ENCODE measurements at regions of chr17 and their contacts with region 1.

Region 1: GRCh38 chr17:45385331-45385997 is 47.2 kb downstream of the ARHGAP27 start:
- DNase-seq: peak; percentile 87
- H3K4me3 ChIP-seq: peak overlapping the region in 1 of 2 experiments; percentile 21; a peak in 1 of 4 replicates
- H3K27ac ChIP-seq: no peak overlapping the region
- H3K4me1 ChIP-seq: peaks cover 0 to 6% of the 10 kb centered on the region in 2 experiments; a peak in 1 of 4 replicates
- H3K27me3 ChIP-seq: no peaks in the 10 kb centered on the region
- CTCF ChIP-seq: peak; percentile 97
- EP300 ChIP-seq: no peak
- RAD21 ChIP-seq: peak; percentile 97

Region 2: GRCh38 chr17:45235416-45236281 is 149.8 kb before region 1 on chr17:
- CTCF ChIA-PET with region 1: interaction called, 132 read pairs
- POLR2A ChIA-PET with region 1: interaction called, 6 read pairs
- DNase-seq: peak; percentile 81
- H3K4me3 ChIP-seq: no peak overlapping the region
- H3K27ac ChIP-seq: no peak overlapping the region
- H3K4me1 ChIP-seq: peaks cover 4 to 16% of the 10 kb centered on the region in 2 experiments; a peak in 2 of 4 replicates
- H3K27me3 ChIP-seq: no peaks in the 10 kb centered on the region
- CTCF ChIP-seq: peak; percentile 83
- EP300 ChIP-seq: no peak
- RAD21 ChIP-seq: peak; percentile 65

Region 3: DNA sequence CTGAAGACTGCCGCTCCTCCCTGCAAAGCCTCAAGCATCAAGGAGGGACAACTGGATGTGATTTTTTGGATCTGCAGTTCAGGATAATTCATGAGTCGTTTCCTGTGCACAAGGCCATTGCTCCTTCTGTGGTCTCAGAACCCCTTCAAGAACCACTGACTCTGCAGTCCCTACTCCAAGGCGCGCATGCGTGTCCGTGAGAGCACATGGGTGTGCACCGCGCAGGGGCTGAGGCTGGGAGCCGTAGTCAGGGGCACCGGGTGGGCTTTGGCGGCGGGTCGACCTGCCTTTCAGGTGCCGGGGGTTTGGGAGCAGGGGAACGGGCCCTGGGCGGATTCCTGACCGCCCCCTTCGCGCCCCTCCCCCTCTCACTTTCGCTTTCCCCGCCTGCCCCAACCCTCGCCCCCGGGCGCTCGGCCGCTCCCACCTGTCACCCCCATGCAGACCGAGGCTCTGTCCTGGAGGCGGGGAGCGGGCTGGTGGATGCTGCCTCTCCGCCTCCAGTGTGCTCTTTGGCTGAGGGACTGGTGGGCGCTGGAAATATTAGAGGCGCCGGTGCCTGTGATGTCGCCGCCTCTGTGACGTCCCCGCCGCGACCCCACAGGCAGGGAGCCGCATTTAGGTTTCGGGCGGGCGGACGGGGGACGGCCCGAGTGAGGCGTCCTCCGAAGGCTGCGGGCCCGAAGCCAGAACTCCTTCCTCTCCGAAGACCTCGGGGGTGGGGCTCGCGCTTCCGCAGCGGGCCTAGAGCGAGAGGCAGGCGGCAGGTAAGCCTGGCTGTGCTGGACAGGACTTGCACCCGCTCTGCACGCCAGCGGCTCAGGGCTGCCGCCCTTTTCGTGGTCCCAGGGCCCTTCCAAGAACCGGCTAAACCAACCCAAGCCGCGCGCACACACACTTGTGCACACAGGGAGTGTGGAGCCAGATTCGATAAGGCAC is 123.6 kb before region 1 on chr17 and contains the start of gene SPATA32:
- CTCF ChIA-PET with region 1: interaction called, 13 read pairs
- POLR2A ChIA-PET with region 1: no interaction called
- DNase-seq: peak; percentile 71
- H3K4me3 ChIP-seq: peak within 1 kb of the TSS in 1 of 2 experiments; percentile 16; a peak in 1 of 4 replicates
- H3K27ac ChIP-seq: no peak within 1 kb of the TSS; a peak in 1 of 4 replicates
- H3K4me1 ChIP-seq: peaks cover 0 to 9% of the 10 kb centered on the region in 2 experiments; a peak in 3 of 4 replicates
- H3K27me3 ChIP-seq: no peaks in the 10 kb centered on the region
- CTCF ChIP-seq: no peak
- EP300 ChIP-seq: no peak
- RAD21 ChIP-seq: no peak
- polyA plus RNA-seq, gene SPATA32: 0.08 TPM in 1 of 2 replicates, not detected in the other

Region 4: DNA sequence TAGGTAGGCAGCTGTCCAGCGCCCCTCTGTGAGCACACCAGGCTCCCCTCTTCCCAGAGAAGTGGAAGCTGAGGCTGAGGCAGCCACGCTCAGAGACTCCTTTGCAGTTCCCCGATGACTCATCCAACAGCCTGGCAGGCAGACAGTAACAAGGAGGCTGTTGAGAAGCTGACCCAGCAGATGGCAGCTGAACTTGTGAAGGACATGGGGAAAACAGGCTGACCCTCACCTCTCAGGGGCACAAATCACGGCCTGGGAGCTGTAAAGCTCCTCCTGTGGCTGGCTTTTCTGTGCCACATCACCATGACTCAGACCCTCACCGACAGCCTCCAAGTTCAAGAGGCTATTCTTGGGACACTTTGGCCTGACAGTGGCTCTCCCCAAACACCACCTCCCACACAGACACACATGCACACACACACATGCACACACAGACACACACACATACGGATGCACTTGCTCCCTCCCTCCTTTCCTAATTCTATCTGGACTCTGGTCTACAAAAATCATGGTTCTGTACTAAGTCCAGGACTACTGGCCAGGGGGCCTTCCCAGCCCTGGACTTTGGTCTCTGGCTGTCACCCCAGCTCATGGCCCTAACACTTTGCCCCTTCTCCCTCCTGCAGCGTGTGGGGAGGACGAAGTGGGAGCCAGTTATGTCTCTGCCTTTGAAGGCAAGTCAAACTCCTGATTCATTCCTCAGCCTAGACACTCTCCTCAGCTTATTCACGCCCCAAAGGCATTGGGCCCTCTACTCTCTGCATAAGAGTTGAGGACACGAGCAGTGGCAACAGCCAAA is 91.9 kb before region 1 on chr17:
- CTCF ChIA-PET with region 1: interaction called, 13 read pairs
- POLR2A ChIA-PET with region 1: no interaction called
- DNase-seq: no peak
- H3K4me3 ChIP-seq: peak overlapping the region in 1 of 2 experiments; percentile 0; a peak in 1 of 4 replicates
- H3K27ac ChIP-seq: peak overlapping the region; percentile 94 to 95
- H3K4me1 ChIP-seq: peaks cover 57 to 78% of the 10 kb centered on the region in 2 experiments
- H3K27me3 ChIP-seq: no peaks in the 10 kb centered on the region
- CTCF ChIP-seq: peak; percentile 36
- EP300 ChIP-seq: peak in 1 of 2 experiments; percentile 89; a peak in 2 of 4 replicates
- RAD21 ChIP-seq: no peak

Region 5: GRCh38 chr17:45317112-45317928 is 68.1 kb before region 1 on chr17:
- CTCF ChIA-PET with region 1: interaction called, 29 read pairs
- POLR2A ChIA-PET with region 1: no interaction called
- DNase-seq: peak; percentile 99
- H3K4me3 ChIP-seq: peak overlapping the region; percentile 87 to 93
- H3K27ac ChIP-seq: peak overlapping the region; percentile 95 to 99
- H3K4me1 ChIP-seq: peaks cover 47 to 58% of the 10 kb centered on the region in 2 experiments
- H3K27me3 ChIP-seq: no peaks in the 10 kb centered on the region
- CTCF ChIP-seq: no peak
- EP300 ChIP-seq: no peak
- RAD21 ChIP-seq: 0 out of 2 replicates have a peak, but pooled peaks have one; percentile 15

Region 6: DNA sequence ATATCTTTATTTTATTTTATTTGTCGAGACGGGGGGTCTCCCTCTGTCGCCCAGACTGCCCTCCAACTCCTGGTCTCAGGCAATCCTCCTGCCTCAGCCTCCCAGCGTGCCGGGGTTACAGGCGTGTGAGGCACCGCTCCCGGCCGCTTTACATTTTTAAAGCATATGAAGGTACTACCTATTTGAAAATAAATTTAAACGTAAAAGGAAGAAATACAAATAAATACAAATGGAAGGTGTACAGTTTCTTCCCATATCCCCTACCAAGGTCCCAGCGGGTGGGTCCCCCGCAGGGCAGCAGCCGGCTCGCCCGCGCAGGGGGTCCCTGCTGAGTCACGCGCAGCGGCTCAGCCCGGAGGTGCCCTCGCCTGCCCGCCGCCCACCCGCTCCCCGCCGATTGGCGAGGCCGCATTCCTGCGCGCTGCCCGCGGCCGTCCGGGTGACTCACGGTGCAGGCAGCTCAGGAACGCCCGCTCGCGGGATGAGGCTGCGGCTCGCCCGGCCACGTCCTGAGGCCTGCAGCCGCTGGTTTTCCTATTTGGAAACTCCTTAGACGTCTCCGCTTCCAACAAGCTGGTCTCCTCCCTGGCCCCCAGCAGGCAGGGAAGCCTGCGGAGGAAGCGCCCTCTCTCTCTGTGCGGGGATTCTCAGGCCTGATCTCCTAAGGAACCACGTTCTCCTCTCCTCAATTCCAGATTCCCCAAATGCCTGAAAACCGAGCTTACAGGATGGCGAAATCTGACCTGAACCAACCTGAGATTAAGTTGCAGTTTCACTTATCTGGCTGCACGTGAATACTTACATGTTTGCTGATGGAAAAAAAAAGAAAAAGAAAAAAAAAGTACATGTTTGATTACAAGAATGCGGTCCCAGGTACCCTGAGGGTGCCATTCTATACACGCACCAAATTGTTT is 13.8 kb before region 1 on chr17:
- CTCF ChIA-PET with region 1: interaction called, 24 read pairs
- POLR2A ChIA-PET with region 1: no interaction called
- DNase-seq: peak; percentile 78
- H3K4me3 ChIP-seq: peak overlapping the region; percentile 1 to 43; a peak in 1 of 4 replicates
- H3K27ac ChIP-seq: peak overlapping the region; percentile 78 to 96
- H3K4me1 ChIP-seq: peaks cover 2 to 31% of the 10 kb centered on the region in 2 experiments; a peak in 3 of 4 replicates
- H3K27me3 ChIP-seq: no peaks in the 10 kb centered on the region
- CTCF ChIP-seq: no peak; the same call in none of the 2 replicates
- EP300 ChIP-seq: peak in 1 of 2 experiments; percentile 94; a peak in 3 of 4 replicates
- RAD21 ChIP-seq: no peak

Region 7: GRCh38 chr17:45440155-45440778 is 54.8 kb after region 1 on chr17:
- CTCF ChIA-PET with region 1: no interaction called
- POLR2A ChIA-PET with region 1: no interaction called
- DNase-seq: no peak
- H3K4me3 ChIP-seq: no peak overlapping the region
- H3K27ac ChIP-seq: no peak overlapping the region; a peak in 1 of 4 replicates
- H3K4me1 ChIP-seq: peaks cover 0 to 59% of the 10 kb centered on the region in 2 experiments; a peak in 1 of 4 replicates
- H3K27me3 ChIP-seq: no peaks in the 10 kb centered on the region
- CTCF ChIP-seq: no peak
- EP300 ChIP-seq: no peak
- RAD21 ChIP-seq: no peak

Region 8: GRCh38 chr17:45702666-45703266 is 317.3 kb after region 1 on chr17:
- CTCF ChIA-PET with region 1: no interaction called
- POLR2A ChIA-PET with region 1: no interaction called
- DNase-seq: no peak
- H3K4me3 ChIP-seq: no peak overlapping the region
- H3K27ac ChIP-seq: no peak overlapping the region
- H3K4me1 ChIP-seq: no peaks in the 10 kb centered on the region; a peak in 1 of 4 replicates
- H3K27me3 ChIP-seq: peaks cover 7% of the 10 kb centered on the region; the same call in 1 of the 2 replicates
- CTCF ChIP-seq: no peak
- EP300 ChIP-seq: no peak
- RAD21 ChIP-seq: no peak

Measured in SK-N-SH (cell line).